Thyroid gland (tissue), 4 donors: ENCODE measurements at regions of chr15 and their contacts with region 1.

Region 1: GRCh38 chr15:60585743-60586708 is 107.1 kb upstream of the ICE2 start:
- DNase-seq: peak; percentile 52 to 57
- H3K4me3 ChIP-seq: no peak overlapping the region
- H3K27ac ChIP-seq: no peak overlapping the region
- H3K4me1 ChIP-seq: peaks cover 0 to 16% of the 10 kb centered on the region in 2 donors
- H3K27me3 ChIP-seq: no peaks in the 10 kb centered on the region
- CTCF ChIP-seq: peak; percentile 72 to 92 (median 84)
- POLR2A ChIP-seq: no peak

Region 2: GRCh38 chr15:61049934-61050333 is 463.9 kb after region 1 on chr15:
- intact Hi-C with region 1: loop called (anchors 10 kb)
- DNase-seq: no peak
- H3K4me3 ChIP-seq: no peak overlapping the region
- H3K27ac ChIP-seq: no peak overlapping the region
- H3K4me1 ChIP-seq: peaks cover 5 to 6% of the 10 kb centered on the region in 2 donors
- H3K27me3 ChIP-seq: no peaks in the 10 kb centered on the region
- CTCF ChIP-seq: no peak
- POLR2A ChIP-seq: no peak